AG04450 (cell line): ENCODE measurements at regions of chr7 and their contacts with region 1.

Region 1: GRCh38 chr7:36670585-36671431 is 53.5 kb downstream of the AOAH start:
- DNase-seq: peak; percentile 27
- H3K4me3 ChIP-seq: no peak overlapping the region
- H3K27ac ChIP-seq: no peak overlapping the region
- H3K27me3 ChIP-seq: peaks cover 2% of the 10 kb centered on the region
- CTCF ChIP-seq: peak; percentile 98

Region 2: DNA sequence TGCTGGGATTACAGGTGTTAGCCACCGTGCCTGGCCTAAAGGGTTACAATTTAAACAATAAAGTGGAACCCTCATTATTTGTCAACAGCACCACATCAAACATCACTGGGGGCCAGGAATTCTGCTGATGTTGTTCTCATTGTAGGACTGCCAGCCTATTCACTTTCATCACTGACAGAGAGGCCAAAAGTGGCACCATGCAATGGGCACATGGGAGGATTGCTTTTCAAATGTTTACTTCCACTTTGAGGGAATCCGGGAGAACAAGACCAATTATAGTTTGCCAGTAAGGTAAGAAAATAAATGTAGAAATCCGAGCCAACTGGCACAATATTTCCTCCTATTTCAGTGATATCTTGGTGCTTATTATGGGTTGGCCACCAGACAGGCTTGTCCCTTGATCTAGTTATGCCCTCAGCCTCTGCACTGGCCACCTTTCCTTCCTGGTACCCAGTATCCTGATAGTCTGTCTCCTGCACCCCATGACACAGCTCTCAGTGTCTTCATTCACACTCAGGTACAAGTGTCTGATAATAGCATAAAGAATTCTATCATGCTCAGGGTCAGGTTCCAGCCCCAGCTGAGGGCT is 198.6 kb before region 1 on chr7:
- CTCF ChIA-PET with region 1: interaction called, 12 read pairs
- POLR2A ChIA-PET with region 1: no interaction called
- DNase-seq: no peak
- H3K4me3 ChIP-seq: no peak overlapping the region
- H3K27ac ChIP-seq: no peak overlapping the region
- H3K27me3 ChIP-seq: no peaks in the 10 kb centered on the region
- CTCF ChIP-seq: no peak

Region 3: DNA sequence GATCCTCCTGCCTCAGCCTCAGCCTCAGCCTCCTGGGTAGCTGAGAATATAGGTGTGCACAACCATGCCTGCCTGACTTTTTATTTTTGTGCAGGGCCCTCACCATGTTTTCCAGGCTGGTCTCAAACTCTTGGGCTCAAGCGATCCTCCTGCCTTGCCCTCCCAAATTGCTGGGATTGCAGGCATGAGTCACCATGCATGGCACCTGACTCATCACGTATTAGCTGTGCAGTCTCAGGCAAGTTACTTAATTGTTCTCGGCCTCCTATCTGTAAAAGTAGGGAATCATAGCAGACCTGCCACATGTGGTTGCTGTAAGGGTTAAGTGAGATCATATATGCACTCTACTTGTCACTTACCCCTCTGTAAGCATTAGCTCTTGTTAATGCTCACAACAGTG is 164.0 kb before region 1 on chr7:
- CTCF ChIA-PET with region 1: interaction called, 14 read pairs
- POLR2A ChIA-PET with region 1: no interaction called
- DNase-seq: no peak
- H3K4me3 ChIP-seq: no peak overlapping the region
- H3K27ac ChIP-seq: no peak overlapping the region
- H3K27me3 ChIP-seq: peaks cover 4% of the 10 kb centered on the region
- CTCF ChIP-seq: no peak

Region 4: DNA sequence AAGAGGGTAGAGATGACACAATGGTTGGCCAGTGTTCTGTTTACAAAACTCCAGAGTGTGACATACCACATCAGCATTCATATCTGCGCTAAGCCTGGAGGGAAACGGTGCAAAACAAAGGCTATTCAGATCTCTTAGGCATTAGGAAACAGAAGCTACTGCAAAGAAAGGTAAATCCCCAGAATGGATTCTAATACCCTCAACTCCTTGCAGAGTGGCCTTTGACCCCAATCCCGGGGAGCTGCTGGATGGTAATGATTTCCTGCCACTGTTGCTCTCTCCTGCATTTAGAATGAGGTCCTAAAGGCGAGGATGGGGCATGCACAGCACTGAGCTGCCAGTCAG is 11.7 kb before region 1 on chr7:
- CTCF ChIA-PET with region 1: interaction called, 13 read pairs
- POLR2A ChIA-PET with region 1: no interaction called
- DNase-seq: peak; percentile 69
- H3K4me3 ChIP-seq: no peak overlapping the region
- H3K27ac ChIP-seq: peak overlapping the region; percentile 93
- H3K27me3 ChIP-seq: no peaks in the 10 kb centered on the region
- CTCF ChIP-seq: no peak